Gastrocnemius medialis (tissue), 4 donors: ENCODE measurements at regions of chr9 and their contacts with region 1.

Region 1: GRCh38 chr9:9319007-9319406 is 1293.8 kb downstream of the PTPRD start:
- DNase-seq: no peak
- ATAC-seq: no peak
- H3K4me3 ChIP-seq: no peak overlapping the region
- H3K27ac ChIP-seq: no peak overlapping the region
- H3K4me1 ChIP-seq: no peaks in the 10 kb centered on the region
- H3K27me3 ChIP-seq: no peaks in the 10 kb centered on the region
- CTCF ChIP-seq: no peak
- POLR2A ChIP-seq: no peak

Region 2: DNA sequence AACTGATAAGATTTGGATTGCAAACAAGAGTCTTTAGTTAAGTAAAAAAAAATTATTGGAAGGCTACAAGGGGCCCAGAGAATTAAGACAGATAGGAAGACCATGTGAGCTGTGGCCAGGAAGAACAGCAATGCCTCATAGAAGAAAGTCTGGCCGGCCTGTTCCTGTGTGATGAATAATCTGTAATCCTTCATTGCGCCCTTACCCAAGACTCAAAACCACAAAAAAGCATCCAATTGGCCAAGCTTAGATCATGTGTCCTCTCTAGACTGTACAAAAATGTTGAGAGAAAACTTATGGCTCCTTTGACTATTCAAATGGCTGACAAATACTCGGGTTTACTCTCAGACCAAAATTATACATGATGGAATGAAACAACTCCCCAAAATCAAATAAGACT is 89.7 kb before region 1 on chr9:
- in situ Hi-C with region 1: no loop called
- intact Hi-C with region 1: no loop called
- DNase-seq: no peak
- ATAC-seq: no peak
- H3K4me3 ChIP-seq: no peak overlapping the region
- H3K27ac ChIP-seq: no peak overlapping the region
- H3K4me1 ChIP-seq: no peaks in the 10 kb centered on the region
- H3K27me3 ChIP-seq: no peaks in the 10 kb centered on the region
- CTCF ChIP-seq: no peak
- POLR2A ChIP-seq: no peak

Region 3: DNA sequence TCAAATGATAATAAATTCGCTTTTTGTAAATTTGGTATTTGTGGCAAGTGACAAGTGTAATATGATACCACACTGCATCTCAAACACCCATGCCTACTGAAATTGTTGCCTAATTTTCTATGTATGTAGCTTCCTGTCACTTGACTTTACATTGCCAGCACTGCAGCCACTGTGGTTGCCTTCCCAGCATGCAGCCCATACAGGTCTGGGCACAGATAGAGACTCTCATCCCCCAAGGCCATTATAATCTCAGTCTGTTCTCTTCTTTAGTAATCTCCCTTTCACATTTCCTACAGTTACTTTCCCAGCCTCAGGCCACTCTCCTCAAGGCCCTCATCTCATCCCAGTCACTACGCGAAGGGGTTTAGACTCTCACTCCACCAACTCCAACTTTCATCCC is 93.2 kb after region 1 on chr9:
- in situ Hi-C with region 1: loop called in 1 of 4 experiments (anchors 25 kb)
- intact Hi-C with region 1: no loop called
- DNase-seq: no peak
- ATAC-seq: no peak
- H3K4me3 ChIP-seq: no peak overlapping the region
- H3K27ac ChIP-seq: no peak overlapping the region
- H3K4me1 ChIP-seq: no peaks in the 10 kb centered on the region
- H3K27me3 ChIP-seq: no peaks in the 10 kb centered on the region
- CTCF ChIP-seq: no peak
- POLR2A ChIP-seq: no peak